PC-3 (cell line): ENCODE measurements at regions of chr2 and their contacts with region 1.

Region 1: GRCh38 chr2:117943013-117943672 is 70.7 kb downstream of the CCDC93 start:
- DNase-seq: peak; percentile 72
- ATAC-seq: peak; percentile 90
- H3K4me3 ChIP-seq: no peak overlapping the region
- H3K27ac ChIP-seq: peak overlapping the region; percentile 49
- H3K4me1 ChIP-seq: peaks cover 33% of the 10 kb centered on the region
- H3K27me3 ChIP-seq: no peaks in the 10 kb centered on the region
- CTCF ChIP-seq: no peak

Region 2: DNA sequence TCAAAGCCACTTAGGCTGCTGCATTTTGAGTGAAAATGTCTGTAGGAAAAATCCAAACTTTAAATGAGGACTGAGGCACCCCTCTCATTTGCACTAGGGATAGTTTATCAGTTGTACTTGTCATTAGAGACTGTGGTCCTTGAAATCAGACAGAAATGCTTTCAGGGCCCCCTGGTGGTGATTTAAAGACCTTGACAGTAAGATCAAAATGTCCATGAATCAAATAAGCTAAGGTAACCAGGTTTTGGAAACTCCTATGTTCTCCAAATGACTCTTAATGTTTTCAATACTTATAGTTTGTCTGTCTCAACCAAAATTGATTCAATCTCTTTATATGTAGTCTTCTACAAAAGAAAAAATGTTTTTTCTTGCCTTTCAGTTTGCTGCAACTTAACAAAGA is 157.4 kb before region 1 on chr2:
- CTCF ChIA-PET with region 1: interaction called, 10 read pairs
- POLR2A ChIA-PET with region 1: no interaction called
- intact Hi-C with region 1: no loop called
- DNase-seq: peak; percentile 68
- ATAC-seq: peak; percentile 51
- H3K4me3 ChIP-seq: no peak overlapping the region
- H3K27ac ChIP-seq: no peak overlapping the region
- H3K4me1 ChIP-seq: no peaks in the 10 kb centered on the region
- H3K27me3 ChIP-seq: no peaks in the 10 kb centered on the region
- CTCF ChIP-seq: peak; percentile 79

Region 3: GRCh38 chr2:117814417-117815264 is 128.5 kb before region 1 on chr2 and contains the start of gene DDX18:
- CTCF ChIA-PET with region 1: interaction called, 3 read pairs
- POLR2A ChIA-PET with region 1: no interaction called
- intact Hi-C with region 1: loop called (anchors 1 kb)
- DNase-seq: peak; percentile 98
- ATAC-seq: peak; percentile 93
- H3K4me3 ChIP-seq: peak within 1 kb of the TSS; percentile 94
- H3K27ac ChIP-seq: peak within 1 kb of the TSS; percentile 68
- H3K4me1 ChIP-seq: peaks cover 19% of the 10 kb centered on the region
- H3K27me3 ChIP-seq: no peaks in the 10 kb centered on the region
- CTCF ChIP-seq: peak; percentile 99
- total RNA-seq, gene DDX18: 40.3 and 42.8 TPM in 2 replicates

Region 4: DNA sequence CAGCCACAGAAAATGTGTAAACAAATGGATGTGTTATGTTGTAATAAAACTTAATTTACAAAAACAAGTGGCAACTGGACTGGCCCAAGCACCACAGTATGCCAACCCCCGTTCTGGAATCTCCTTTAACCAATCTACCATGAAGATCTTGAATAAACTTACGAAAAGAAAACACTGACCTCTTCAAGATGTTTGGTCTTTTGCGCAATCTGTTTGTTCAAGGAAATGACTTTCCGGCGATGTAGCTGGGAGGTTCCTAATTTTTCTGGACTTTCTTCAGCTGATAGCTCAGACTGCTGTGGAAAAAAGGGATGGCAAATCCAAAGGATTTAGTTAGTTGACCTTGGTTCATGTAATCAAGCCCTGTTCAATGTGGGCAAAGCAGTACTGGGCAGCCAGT is 15.0 kb after region 1 on chr2:
- CTCF ChIA-PET with region 1: no interaction called
- POLR2A ChIA-PET with region 1: no interaction called
- intact Hi-C with region 1: loop called (anchors 2 kb)
- DNase-seq: peak; percentile 93
- ATAC-seq: peak; percentile 82
- H3K4me3 ChIP-seq: no peak overlapping the region; the same call in 1 of the 2 replicates
- H3K27ac ChIP-seq: peak overlapping the region; percentile 83
- H3K4me1 ChIP-seq: peaks cover 26% of the 10 kb centered on the region
- H3K27me3 ChIP-seq: no peaks in the 10 kb centered on the region
- CTCF ChIP-seq: no peak

Region 5: DNA sequence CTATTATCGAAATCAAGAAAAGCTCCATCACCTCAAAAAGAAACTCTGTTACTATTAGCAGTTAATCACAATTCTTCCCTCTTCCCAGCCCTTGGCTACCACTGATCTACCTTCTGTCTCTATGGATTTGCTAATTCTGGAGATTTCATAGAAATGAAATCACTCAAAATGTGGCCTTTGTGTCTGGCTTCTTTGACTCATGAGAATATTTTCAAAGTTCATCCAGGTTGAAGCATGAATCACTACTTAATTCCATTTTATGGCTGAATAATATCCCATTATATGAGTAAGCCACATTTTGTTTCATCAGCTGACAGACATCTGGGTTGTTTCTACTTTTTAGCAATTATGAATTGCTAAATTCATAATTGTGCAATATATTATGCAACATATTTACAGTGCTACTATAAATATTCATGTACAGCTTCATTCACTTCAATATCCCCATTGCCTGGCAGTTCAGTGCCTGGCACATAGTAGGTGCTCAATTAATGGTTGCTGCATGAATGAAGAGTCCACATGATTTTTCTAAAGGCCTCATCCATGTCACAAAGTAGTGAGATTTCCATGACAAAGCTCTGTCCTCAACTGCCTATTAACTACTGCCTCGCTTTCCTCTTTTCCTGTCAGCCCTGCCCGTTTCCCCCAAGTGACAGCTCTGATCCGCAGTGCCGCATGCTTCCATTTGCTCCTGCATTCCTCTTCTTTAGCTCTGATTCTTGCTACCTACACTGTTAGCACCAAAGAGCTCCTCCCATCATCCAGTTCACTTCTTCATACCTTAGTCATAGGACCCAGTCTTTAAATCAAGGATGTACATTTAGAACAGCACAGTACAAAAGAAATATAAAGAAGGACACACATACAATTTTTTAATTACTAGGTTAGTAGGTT is 37.9 kb after region 1 on chr2:
- CTCF ChIA-PET with region 1: no interaction called
- POLR2A ChIA-PET with region 1: no interaction called
- intact Hi-C with region 1: loop called (anchors 5 kb)
- DNase-seq: peak; percentile 89
- ATAC-seq: peak; percentile 83
- H3K4me3 ChIP-seq: no peak overlapping the region
- H3K27ac ChIP-seq: peak overlapping the region; percentile 78
- H3K4me1 ChIP-seq: peaks cover 38% of the 10 kb centered on the region
- H3K27me3 ChIP-seq: no peaks in the 10 kb centered on the region
- CTCF ChIP-seq: no peak

Region 6: GRCh38 chr2:118003396-118003824 is 60.3 kb after region 1 on chr2:
- CTCF ChIA-PET with region 1: no interaction called
- POLR2A ChIA-PET with region 1: no interaction called
- intact Hi-C with region 1: loop called (anchors 5 kb)
- DNase-seq: peak; percentile 85
- ATAC-seq: peak; percentile 99
- H3K4me3 ChIP-seq: no peak overlapping the region
- H3K27ac ChIP-seq: no peak overlapping the region
- H3K4me1 ChIP-seq: no peaks in the 10 kb centered on the region
- H3K27me3 ChIP-seq: no peaks in the 10 kb centered on the region
- CTCF ChIP-seq: peak; percentile 88